GM10248 (cell line): ENCODE measurements at regions of chr4 and their contacts with region 1.

Region 1: DNA sequence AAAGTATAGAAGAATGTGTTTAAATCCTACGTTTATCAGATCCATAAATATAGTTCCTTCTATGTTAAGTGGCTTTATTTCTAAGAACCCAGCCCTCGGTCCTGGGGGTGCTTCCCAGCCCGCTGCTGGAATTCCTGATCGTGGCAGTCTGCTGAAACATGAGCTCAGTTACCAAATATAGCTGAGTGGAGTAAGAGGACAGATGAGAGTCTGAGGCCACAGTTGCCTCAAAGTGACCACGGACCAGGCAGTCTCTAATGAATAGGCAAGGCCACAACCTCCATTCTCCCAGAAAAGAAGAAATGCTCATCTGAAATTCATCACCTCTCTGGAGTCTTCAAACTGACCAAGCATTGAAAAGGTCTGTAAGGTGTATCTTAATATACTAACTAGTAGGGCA is at the start of gene PALLD:
- DNase-seq: no peak
- CTCF ChIP-seq: no peak

Region 2: GRCh38 chr4:168480931-168481611 is 15.8 kb before region 1 on chr4:
- CTCF ChIA-PET with region 1: no interaction called
- POLR2A ChIA-PET with region 1: no interaction called
- DNase-seq: peak; percentile 24
- CTCF ChIP-seq: no peak

Region 3: GRCh38 chr4:168509786-168510185 is 13.0 kb after region 1 on chr4:
- CTCF ChIA-PET with region 1: interaction called, 10 read pairs
- POLR2A ChIA-PET with region 1: no interaction called
- DNase-seq: no peak
- CTCF ChIP-seq: no peak